Calu3 (cell line): ENCODE measurements at regions of chr3 and their contacts with region 1.

Region 1: GRCh38 chr3:189148081-189148507 is 23.7 kb upstream of the TPRG1 start:
- DNase-seq: peak; percentile 74
- H3K4me3 Mint-ChIP-seq: no peak overlapping the region
- H3K27ac Mint-ChIP-seq: no peak overlapping the region
- H3K4me1 Mint-ChIP-seq: peaks cover 27% of the 10 kb centered on the region
- H3K27me3 Mint-ChIP-seq: no peaks in the 10 kb centered on the region
- CTCF ChIP-seq: peak; percentile 81

Region 2: GRCh38 chr3:189049438-189050236 is 98.5 kb before region 1 on chr3:
- CTCF ChIA-PET with region 1: no interaction called
- intact Hi-C with region 1: loop called (anchors 5 kb)
- DNase-seq: no peak
- H3K4me3 Mint-ChIP-seq: no peak overlapping the region
- H3K27ac Mint-ChIP-seq: no peak overlapping the region
- H3K4me1 Mint-ChIP-seq: no peaks in the 10 kb centered on the region
- H3K27me3 Mint-ChIP-seq: peaks cover 46% of the 10 kb centered on the region
- CTCF ChIP-seq: peak; percentile 20